Caco-2 (cell line): ENCODE measurements at regions of chr20 and their contacts with region 1.

Region 1: GRCh38 chr20:51703400-51704287 is 64.5 kb downstream of the ATP9A start:
- DNase-seq: peak; percentile 69 to 81
- H3K4me3 ChIP-seq: no peak overlapping the region
- H3K4me3 Mint-ChIP-seq: peak overlapping the region; percentile 61
- H3K27ac Mint-ChIP-seq: peak overlapping the region; percentile 83
- H3K4me1 ChIP-seq: peaks cover 61% of the 10 kb centered on the region
- H3K4me1 Mint-ChIP-seq: peaks cover 66% of the 10 kb centered on the region
- H3K27me3 ChIP-seq: no peaks in the 10 kb centered on the region
- H3K27me3 Mint-ChIP-seq: no peaks in the 10 kb centered on the region
- CTCF ChIP-seq: no peak

Region 2: GRCh38 chr20:51667002-51667408 is 36.6 kb before region 1 on chr20:
- CTCF ChIA-PET with region 1: interaction called, 17 read pairs
- POLR2A ChIA-PET with region 1: interaction called, 5 read pairs
- intact Hi-C with region 1: loop called (anchors 1 kb)
- DNase-seq: peak; percentile 76 to 82
- H3K4me3 ChIP-seq: no peak overlapping the region
- H3K4me3 Mint-ChIP-seq: no peak overlapping the region
- H3K27ac Mint-ChIP-seq: peak overlapping the region; percentile 8
- H3K4me1 ChIP-seq: peaks cover 36% of the 10 kb centered on the region
- H3K4me1 Mint-ChIP-seq: peaks cover 36% of the 10 kb centered on the region
- H3K27me3 ChIP-seq: no peaks in the 10 kb centered on the region
- H3K27me3 Mint-ChIP-seq: no peaks in the 10 kb centered on the region
- CTCF ChIP-seq: no peak

Region 3: GRCh38 chr20:51725380-51726203 is 21.9 kb after region 1 on chr20:
- CTCF ChIA-PET with region 1: no interaction called
- POLR2A ChIA-PET with region 1: no interaction called
- intact Hi-C with region 1: loop called (anchors 2 kb)
- DNase-seq: no peak
- H3K4me3 ChIP-seq: no peak overlapping the region
- H3K4me3 Mint-ChIP-seq: no peak overlapping the region
- H3K27ac Mint-ChIP-seq: peak overlapping the region; percentile 13
- H3K4me1 ChIP-seq: peaks cover 22% of the 10 kb centered on the region
- H3K4me1 Mint-ChIP-seq: peaks cover 30% of the 10 kb centered on the region
- H3K27me3 ChIP-seq: no peaks in the 10 kb centered on the region
- H3K27me3 Mint-ChIP-seq: no peaks in the 10 kb centered on the region
- CTCF ChIP-seq: no peak

Region 4: DNA sequence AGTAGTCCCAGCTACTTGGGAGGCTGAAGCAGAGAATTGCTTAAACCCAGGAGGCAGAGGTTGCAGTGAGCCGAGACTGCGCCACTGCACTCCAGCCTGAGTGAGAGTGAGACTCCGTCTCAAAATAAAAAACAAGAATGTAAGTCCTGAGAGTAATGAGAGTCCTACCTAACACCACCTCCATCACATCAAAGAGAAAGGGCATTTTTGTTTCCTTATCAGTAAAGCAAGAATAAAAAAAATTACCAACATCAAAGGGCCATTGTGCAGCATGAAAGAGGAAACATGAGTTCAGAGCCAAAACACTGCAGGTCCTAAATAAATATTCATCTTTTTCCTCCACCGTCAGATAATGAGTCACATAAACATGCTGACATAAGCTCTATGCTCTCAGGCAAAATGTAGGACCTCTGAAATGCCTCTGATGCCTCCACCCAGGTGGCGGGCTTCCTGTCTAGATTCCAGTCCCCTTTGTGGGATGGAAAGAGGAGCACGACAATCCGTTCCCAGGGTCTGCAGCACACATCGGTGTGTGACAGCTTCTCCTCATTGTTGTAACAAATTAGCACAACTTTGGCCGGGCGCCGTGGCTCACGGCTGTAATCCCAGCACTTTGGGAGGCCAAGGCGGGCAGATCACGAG is 57.4 kb after region 1 on chr20:
- CTCF ChIA-PET with region 1: interaction called, 9 read pairs
- POLR2A ChIA-PET with region 1: interaction called, 3 read pairs
- intact Hi-C with region 1: loop called (anchors 1 kb)
- DNase-seq: peak; percentile 84 to 86
- H3K4me3 ChIP-seq: no peak overlapping the region
- H3K4me3 Mint-ChIP-seq: peak overlapping the region; percentile 27
- H3K27ac Mint-ChIP-seq: peak overlapping the region; percentile 89
- H3K4me1 ChIP-seq: peaks cover 52% of the 10 kb centered on the region
- H3K4me1 Mint-ChIP-seq: peaks cover 55% of the 10 kb centered on the region
- H3K27me3 ChIP-seq: no peaks in the 10 kb centered on the region
- H3K27me3 Mint-ChIP-seq: no peaks in the 10 kb centered on the region
- CTCF ChIP-seq: no peak

Region 5: DNA sequence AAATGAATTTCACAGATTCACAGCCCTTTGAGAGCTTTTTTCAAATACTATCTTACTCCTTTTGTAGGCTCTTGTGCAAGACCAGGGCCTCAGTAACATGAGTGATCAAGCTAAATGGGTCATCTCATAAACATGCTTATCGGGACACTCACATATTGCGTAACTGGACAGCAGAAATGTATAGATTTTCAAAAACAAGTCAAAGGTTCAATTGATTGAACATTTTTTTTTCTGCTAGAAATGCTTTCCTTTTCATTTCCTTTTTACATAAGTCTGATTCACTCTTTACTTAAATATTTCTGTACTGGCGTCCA is 107.4 kb after region 1 on chr20:
- CTCF ChIA-PET with region 1: no interaction called
- POLR2A ChIA-PET with region 1: no interaction called
- intact Hi-C with region 1: no loop called
- DNase-seq: peak; percentile 45 to 56
- H3K4me3 ChIP-seq: no peak overlapping the region
- H3K4me3 Mint-ChIP-seq: no peak overlapping the region
- H3K27ac Mint-ChIP-seq: peak overlapping the region; percentile 32
- H3K4me1 ChIP-seq: peaks cover 36% of the 10 kb centered on the region
- H3K4me1 Mint-ChIP-seq: peaks cover 35% of the 10 kb centered on the region
- H3K27me3 ChIP-seq: no peaks in the 10 kb centered on the region
- H3K27me3 Mint-ChIP-seq: no peaks in the 10 kb centered on the region
- CTCF ChIP-seq: no peak

Region 6: DNA sequence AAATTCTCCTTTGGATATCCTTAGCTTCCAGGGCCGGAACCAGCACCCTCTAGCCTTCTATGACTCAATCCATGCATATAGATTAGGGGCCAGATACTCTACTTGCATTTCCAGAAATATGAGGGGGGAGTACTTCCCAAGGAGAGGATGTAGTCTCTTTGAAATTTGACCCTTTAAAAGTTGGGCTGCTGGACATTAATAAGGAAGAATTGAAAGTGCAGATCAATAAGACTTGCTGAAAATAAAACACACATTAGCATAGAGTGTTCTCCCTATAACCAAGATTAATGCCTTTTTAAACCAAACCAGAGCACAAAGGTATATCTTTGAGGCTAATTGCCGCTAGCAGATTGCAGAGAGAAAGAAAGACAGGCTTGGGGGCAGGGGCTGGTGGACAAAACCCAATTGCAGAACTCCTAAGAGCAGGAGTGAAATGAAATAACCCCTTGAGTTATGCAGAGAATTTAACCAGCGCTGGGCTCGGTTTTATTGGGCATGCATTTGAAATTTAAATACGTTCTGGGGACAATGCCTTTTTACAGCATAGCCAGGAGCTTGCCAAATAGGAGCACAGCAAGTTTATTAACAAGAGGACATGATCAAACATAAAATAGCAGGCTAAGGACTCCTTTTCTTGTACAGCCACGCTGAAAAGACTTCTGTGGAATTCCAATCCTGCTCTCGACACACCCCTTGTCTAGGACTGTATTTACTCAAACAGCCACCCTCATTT is 206.8 kb after region 1 on chr20:
- CTCF ChIA-PET with region 1: interaction called, 4 read pairs
- POLR2A ChIA-PET with region 1: no interaction called
- intact Hi-C with region 1: loop called (anchors 5 kb)
- DNase-seq: peak; percentile 78 to 80
- H3K4me3 ChIP-seq: 0 out of 2 replicates have a peak overlapping the region, but pooled peaks have one; percentile 6
- H3K4me3 Mint-ChIP-seq: peak overlapping the region; percentile 68
- H3K27ac Mint-ChIP-seq: peak overlapping the region; percentile 82
- H3K4me1 ChIP-seq: peaks cover 39% of the 10 kb centered on the region
- H3K4me1 Mint-ChIP-seq: peaks cover 47% of the 10 kb centered on the region
- H3K27me3 ChIP-seq: no peaks in the 10 kb centered on the region
- H3K27me3 Mint-ChIP-seq: no peaks in the 10 kb centered on the region
- CTCF ChIP-seq: no peak

Region 7: DNA sequence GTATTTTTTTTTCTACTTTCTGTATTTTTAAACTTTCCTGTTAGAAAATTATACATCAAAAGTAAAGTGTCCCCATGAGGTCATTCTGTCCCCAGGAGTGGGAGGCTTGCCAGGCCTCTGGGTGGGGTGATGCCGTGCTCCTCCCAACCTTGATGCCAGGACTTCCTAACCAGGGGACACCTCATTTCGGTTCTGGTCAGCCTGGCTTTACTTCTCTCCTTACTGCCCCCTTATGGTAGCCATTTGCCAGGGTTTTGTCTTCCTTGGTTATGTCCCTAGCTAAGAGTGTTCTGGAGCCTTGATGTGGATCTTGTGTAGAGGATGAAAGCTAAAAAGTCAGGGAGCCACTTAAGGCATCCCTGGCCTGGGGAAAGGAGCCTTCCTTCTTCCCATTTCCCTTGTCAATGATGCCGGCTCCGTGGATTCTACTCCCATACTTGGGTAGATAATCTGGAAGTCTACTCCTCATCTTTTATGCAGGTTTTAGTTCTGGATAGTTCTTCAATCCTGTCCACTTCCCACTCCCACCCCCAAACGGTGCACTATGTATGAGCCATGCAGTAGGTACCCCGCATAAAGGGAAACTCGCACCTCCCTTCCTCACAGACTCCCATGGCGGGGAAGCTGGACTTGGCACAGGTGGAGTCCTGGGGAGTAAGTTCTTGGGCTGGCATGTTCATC is 262.8 kb after region 1 on chr20:
- CTCF ChIA-PET with region 1: interaction called, 7 read pairs
- POLR2A ChIA-PET with region 1: no interaction called
- intact Hi-C with region 1: loop called (anchors 5 kb)
- DNase-seq: peak; percentile 87
- H3K4me3 ChIP-seq: no peak overlapping the region
- H3K4me3 Mint-ChIP-seq: no peak overlapping the region
- H3K27ac Mint-ChIP-seq: no peak overlapping the region
- H3K4me1 ChIP-seq: peaks cover 6% of the 10 kb centered on the region; the same call in 1 of the 2 replicates
- H3K4me1 Mint-ChIP-seq: peaks cover 11% of the 10 kb centered on the region
- H3K27me3 ChIP-seq: no peaks in the 10 kb centered on the region
- H3K27me3 Mint-ChIP-seq: no peaks in the 10 kb centered on the region
- CTCF ChIP-seq: peak; percentile 86 to 88